GM18951 (cell line): ENCODE measurements at regions of chr3 and their contacts with region 1.

Region 1: DNA sequence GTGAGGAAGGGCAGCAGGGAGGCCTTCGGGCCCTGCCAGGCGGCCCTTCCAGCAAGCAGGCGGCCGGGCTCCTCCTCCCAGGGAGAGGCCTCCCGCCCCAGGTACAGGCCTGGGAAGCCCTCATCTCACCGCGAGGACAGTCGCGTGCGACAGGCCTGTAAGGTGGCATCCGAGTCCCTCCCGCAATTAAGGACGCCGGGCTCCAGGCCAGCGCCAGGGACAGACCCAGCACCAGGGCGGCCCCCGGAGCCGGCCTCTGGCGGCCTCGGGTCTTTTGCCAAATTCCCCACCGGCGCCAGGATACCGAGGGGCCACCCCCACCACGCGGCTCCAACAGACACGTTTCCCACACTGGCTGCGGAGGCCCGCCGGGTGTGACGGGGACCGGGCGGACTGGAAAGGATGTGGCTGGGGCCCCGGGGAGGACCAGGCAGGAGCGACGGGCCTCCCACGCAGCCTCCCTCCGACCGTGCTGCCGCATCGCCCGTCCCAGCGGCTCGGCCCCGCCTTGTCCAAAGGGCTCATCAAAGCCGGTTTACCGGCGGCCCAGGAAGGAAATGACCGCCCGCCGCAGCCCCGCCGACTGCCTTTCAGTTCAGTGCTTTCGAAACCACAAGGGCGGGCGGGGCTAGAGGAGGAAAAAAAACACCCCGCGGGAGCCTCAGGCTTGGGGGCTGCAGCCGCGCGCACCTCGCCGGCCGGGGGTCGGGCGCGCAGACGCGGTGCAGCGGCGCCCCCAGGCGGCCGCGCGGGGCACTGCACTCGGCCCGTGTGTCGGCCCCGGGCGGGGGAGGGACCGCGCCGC is 11.3 kb downstream of the XXYLT1 start:
- POLR2A ChIP-seq: peak; percentile 76

Region 2: DNA sequence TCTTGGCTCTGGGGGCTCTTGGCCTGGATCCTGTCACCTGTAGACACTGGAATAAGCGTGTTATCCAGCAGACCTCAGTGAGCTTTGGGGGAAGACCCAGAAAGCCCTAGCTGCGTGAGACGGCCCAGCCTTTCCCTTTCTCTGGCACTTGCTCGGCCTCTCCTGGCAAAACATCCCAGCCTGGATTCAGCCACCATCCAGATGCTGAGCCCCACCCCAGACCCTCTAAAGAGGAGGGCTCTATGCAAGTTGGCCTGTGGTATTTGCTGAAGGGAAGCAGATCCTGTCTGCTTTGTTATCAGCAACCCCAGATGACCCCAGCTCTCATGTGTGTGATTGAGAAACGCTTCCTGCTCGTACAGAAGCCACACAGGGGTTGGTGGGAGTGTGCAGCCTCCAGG is 306.8 kb before region 1 on chr3:
- in situ Hi-C with region 1: no loop called
- POLR2A ChIP-seq: no peak

Region 3: DNA sequence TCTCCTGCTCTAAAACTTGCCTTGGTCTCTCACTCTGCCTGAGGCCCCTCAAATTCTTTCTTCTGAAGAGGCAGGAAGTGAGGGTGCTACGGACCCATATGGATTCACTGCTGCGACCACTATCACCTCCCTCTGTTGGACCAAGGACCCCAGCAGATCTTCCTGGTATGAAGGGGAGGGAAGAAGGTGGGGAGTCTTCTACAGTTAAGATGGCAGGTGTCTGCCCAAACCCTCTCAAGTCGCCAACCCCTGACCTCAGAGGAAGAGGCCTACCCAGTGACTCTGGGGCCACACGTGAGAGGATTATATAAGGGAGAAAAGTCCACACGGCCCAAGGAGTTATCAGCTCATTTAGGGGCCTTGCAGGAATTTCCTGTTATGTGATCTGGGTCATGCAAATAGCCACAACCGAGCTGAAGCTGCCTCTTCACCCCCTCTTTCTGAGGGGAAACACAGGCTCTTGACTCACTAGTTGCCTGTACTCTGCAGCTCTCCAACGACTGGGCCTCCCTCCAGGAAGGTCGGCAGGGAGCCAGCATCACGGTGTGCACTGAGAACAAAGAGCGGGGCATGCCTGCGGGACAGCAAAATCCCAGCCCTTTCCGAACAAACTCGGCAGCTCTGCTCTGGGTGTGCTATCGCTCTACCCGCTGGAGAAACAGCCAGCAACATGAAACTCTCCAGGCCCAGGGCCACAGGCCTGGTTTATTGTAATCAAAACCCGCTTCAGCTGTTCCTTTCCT is 104.7 kb before region 1 on chr3:
- in situ Hi-C with region 1: loop called (anchors 10 kb)
- POLR2A ChIP-seq: no peak

Region 4: GRCh38 chr3:195165790-195166189 is 93.9 kb before region 1 on chr3:
- in situ Hi-C with region 1: no loop called
- POLR2A ChIP-seq: no peak